ENCODE measurements at regions of chr12 and their contacts with region 1.

Region 1: DNA sequence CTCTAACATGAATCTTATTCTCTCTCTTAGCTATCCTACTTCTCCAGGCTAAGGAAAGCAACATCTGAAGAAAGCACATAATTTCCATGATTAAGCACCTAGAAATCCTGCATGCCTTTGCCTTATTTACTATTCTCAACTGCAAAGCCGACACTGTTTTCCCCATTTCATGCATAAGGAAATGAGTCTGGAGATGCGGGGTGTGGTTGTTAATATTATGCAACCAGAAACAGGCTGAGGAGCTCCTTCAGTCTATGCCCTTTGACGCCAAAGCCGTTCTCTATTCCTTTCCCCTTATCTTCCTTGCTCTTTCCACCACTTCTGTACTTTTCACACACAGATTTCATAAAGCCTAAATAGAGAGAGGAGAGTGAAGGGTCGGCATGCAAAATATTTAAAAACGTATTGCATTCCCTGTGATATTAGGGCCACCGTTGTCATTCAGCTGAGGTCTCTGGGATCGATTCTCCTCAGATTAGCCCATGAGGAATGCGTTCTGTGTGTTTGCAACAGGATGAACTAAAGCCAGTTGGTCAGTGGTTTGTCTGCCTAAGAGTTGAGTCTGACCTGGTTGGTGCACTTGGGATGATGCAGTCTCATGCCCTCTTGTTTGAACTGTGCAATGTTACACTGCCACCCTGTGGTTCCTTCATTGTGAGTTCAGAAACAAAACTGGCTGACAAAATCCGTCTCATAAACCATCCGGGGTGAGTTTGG is 53.1 kb upstream of the PLEKHG7 start:
- DNase-seq: peak; percentile 26 to 73 (median 53)
- H3K4me3 ChIP-seq: no peak overlapping the region
- H3K4me3 Mint-ChIP-seq: no peak overlapping the region
- H3K27ac ChIP-seq: no peak overlapping the region
- H3K27ac Mint-ChIP-seq: peak overlapping the region in 6 of 8 donors; percentile 3 to 79 (median 30)
- H3K4me1 ChIP-seq: no peaks in the 10 kb centered on the region
- H3K4me1 Mint-ChIP-seq: peaks cover 6 to 10% (median 10%) of the 10 kb centered on the region in 3 donors
- H3K27me3 ChIP-seq: no peaks in the 10 kb centered on the region
- H3K27me3 Mint-ChIP-seq: peaks cover 4 to 6% of the 10 kb centered on the region in 2 donors

Region 2: DNA sequence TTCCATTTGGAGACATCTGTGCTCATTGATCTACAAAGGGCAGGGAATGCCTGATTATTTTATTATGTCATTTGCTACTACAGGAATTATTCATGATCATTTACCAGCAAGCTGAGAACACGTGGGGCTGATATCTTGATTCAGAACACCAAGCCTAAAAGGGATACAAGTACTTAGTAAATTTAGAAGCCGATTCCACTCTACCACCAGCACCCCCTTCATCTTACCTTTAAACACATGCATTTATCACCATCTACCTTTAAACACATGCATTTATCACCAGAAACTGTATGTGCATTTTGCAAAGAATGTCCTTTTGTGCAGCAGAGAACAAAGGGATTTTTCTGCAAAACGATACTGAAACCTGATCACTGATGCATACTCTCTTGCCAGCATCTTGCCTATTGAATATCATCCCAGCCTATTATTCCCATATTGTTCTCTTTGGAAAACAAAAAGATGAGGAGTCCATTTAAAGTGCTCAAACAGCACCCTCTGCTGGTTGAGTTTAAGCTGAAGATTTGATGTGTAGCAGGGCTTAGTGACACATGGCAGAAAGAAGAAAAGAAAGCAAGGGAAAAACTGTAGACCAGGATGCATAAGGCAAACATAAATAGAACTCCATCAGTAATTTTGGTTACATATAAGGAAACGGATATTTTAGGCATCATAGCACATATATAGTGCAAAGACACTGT is 79.5 kb before region 1 on chr12:
- CTCF ChIA-PET with region 1: interaction called, 10 read pairs
- POLR2A ChIA-PET with region 1: no interaction called
- DNase-seq: peak in 4 of 5 donors; percentile 35 to 72 (median 66)
- H3K4me3 ChIP-seq: no peak overlapping the region
- H3K4me3 Mint-ChIP-seq: no peak overlapping the region
- H3K27ac ChIP-seq: no peak overlapping the region
- H3K27ac Mint-ChIP-seq: no peak overlapping the region
- H3K4me1 ChIP-seq: peaks cover 22% of the 10 kb centered on the region
- H3K4me1 Mint-ChIP-seq: peaks cover 0 to 9% (median 6%) of the 10 kb centered on the region in 3 donors
- H3K27me3 ChIP-seq: no peaks in the 10 kb centered on the region
- H3K27me3 Mint-ChIP-seq: no peaks in the 10 kb centered on the region

Region 3: GRCh38 chr12:92630456-92630855 is 19.2 kb before region 1 on chr12:
- CTCF ChIA-PET with region 1: interaction called, 15 read pairs
- POLR2A ChIA-PET with region 1: no interaction called
- DNase-seq: no peak
- H3K4me3 ChIP-seq: no peak overlapping the region
- H3K4me3 Mint-ChIP-seq: no peak overlapping the region
- H3K27ac ChIP-seq: no peak overlapping the region
- H3K27ac Mint-ChIP-seq: peak overlapping the region in 1 of 8 donors; percentile 39
- H3K4me1 ChIP-seq: no peaks in the 10 kb centered on the region
- H3K4me1 Mint-ChIP-seq: no peaks in the 10 kb centered on the region
- H3K27me3 ChIP-seq: no peaks in the 10 kb centered on the region
- H3K27me3 Mint-ChIP-seq: peaks cover 3 to 5% of the 10 kb centered on the region in 2 donors